Activated CD4-positive, alpha-beta memory T cell treated with anti-CD3 and anti-CD28 coated beads for 36 hours (primary cell): ENCODE measurements at regions of chr17 and their contacts with region 1.

Region 1: DNA sequence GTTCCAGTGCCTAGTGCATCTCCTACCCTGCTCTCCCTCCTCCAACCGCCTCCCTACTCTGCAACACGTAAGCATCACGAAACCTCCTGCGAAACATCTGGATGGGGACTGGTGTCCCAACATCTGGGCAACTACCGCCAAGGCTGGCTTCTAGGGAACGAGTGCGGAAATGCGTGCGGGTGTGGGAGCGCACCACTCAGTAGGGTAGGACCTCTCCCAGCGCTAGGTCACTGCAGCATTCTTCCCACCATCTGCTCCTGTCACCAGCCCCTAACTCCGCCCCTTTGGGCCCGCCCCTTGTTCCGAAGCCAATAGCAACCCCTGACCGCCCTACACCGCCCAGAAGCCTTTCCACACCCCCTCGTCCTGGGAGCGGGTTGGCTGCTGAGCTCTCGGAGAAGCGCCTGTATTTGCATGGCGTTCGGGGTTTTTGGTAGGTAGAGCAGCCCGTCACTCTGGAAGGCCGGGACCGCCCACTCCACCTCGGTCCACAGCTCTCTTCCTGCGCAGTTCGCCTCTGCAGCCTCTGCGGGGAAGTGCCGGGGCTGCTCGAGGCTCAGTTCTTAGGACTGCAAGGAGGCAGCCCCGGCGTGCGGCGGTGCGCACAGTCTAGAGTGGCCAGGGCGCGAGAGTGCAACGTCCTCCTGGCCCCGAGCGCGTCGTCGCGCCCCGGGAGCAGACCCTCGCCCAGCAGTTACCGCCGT is at the start of gene HS3ST3B1:
- DNase-seq: peak; percentile 100
- H3K4me3 Mint-ChIP-seq: peak within 1 kb of the TSS; percentile 93
- H3K27ac Mint-ChIP-seq: peak within 1 kb of the TSS; percentile 92
- H3K4me1 Mint-ChIP-seq: peaks cover 49% of the 10 kb centered on the region
- H3K27me3 Mint-ChIP-seq: peaks cover 26% of the 10 kb centered on the region
- total RNA-seq, gene HS3ST3B1: 13.4 to 13.9 TPM

Region 2: GRCh38 chr17:13346996-13347765 is 953.5 kb before region 1 on chr17:
- CTCF ChIA-PET with region 1: no interaction called
- POLR2A ChIA-PET with region 1: no interaction called
- intact Hi-C with region 1: loop called (anchors 5 kb)
- DNase-seq: peak; percentile 58
- H3K4me3 Mint-ChIP-seq: no peak overlapping the region
- H3K27ac Mint-ChIP-seq: peak overlapping the region; percentile 38
- H3K4me1 Mint-ChIP-seq: peaks cover 16% of the 10 kb centered on the region
- H3K27me3 Mint-ChIP-seq: peaks cover 9% of the 10 kb centered on the region

Region 3: GRCh38 chr17:14118951-14119350 is 181.8 kb before region 1 on chr17:
- CTCF ChIA-PET with region 1: interaction called, 6 read pairs
- POLR2A ChIA-PET with region 1: interaction called, 4 read pairs
- intact Hi-C with region 1: loop called (anchors 2 kb)
- DNase-seq: no peak
- H3K4me3 Mint-ChIP-seq: peak overlapping the region; percentile 30
- H3K27ac Mint-ChIP-seq: peak overlapping the region; percentile 96
- H3K4me1 Mint-ChIP-seq: peaks cover 89% of the 10 kb centered on the region
- H3K27me3 Mint-ChIP-seq: no peaks in the 10 kb centered on the region

Region 4: DNA sequence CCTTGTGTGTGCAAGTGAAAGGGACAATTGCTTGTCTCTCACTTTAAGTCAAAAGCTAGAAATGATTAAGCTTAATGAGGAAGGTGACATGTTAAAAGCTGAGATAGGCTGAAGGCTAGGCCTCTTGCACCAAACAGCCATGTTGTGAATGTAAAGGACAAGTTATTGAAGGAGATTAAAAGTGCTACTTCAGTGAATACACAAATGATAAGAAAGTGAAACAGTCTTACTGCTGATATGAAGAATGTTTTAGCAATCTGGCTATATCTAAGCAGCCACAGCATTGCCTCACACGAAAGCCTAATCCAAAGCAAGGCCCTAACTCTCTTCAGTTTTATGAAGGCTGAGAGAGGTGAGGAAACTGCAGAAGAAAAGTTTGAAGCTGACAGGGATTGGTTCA is 135.1 kb before region 1 on chr17:
- CTCF ChIA-PET with region 1: no interaction called
- POLR2A ChIA-PET with region 1: no interaction called
- intact Hi-C with region 1: no loop called
- DNase-seq: no peak
- H3K4me3 Mint-ChIP-seq: no peak overlapping the region
- H3K27ac Mint-ChIP-seq: no peak overlapping the region
- H3K4me1 Mint-ChIP-seq: peaks cover 15% of the 10 kb centered on the region
- H3K27me3 Mint-ChIP-seq: no peaks in the 10 kb centered on the region

Region 5: DNA sequence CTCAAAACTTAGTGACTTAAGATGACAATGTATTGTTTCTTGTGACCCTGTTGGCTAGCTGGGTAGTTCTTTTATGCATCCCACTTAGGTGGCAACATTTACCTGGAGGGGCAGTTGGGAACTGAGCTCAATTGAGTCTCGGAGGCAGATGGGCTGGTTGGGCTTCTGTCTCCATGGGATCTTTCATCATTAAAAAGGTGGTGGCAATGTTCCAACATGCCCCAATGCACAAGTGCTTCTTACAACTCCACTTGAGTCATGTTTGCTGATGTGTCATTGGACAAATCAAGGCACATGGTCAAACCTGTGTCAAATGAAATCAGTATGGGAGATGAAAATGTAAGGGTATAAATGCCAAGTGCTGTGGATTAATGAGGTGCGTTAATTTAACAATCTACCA is 11.6 kb before region 1 on chr17:
- CTCF ChIA-PET with region 1: no interaction called
- POLR2A ChIA-PET with region 1: no interaction called
- intact Hi-C with region 1: no loop called
- DNase-seq: no peak
- H3K4me3 Mint-ChIP-seq: no peak overlapping the region
- H3K27ac Mint-ChIP-seq: no peak overlapping the region
- H3K4me1 Mint-ChIP-seq: no peaks in the 10 kb centered on the region
- H3K27me3 Mint-ChIP-seq: peaks cover 22% of the 10 kb centered on the region

Region 6: GRCh38 chr17:14337596-14338079 is 36.9 kb after region 1 on chr17:
- CTCF ChIA-PET with region 1: interaction called, 6 read pairs
- POLR2A ChIA-PET with region 1: interaction called, 18 read pairs
- intact Hi-C with region 1: loop called (anchors 1 kb)
- DNase-seq: peak; percentile 85
- H3K4me3 Mint-ChIP-seq: no peak overlapping the region
- H3K27ac Mint-ChIP-seq: peak overlapping the region; percentile 74
- H3K4me1 Mint-ChIP-seq: peaks cover 84% of the 10 kb centered on the region
- H3K27me3 Mint-ChIP-seq: no peaks in the 10 kb centered on the region

Region 7: GRCh38 chr17:14784997-14785696 is 484.4 kb after region 1 on chr17:
- CTCF ChIA-PET with region 1: no interaction called
- POLR2A ChIA-PET with region 1: no interaction called
- intact Hi-C with region 1: loop called (anchors 10 kb)
- DNase-seq: peak; percentile 28
- H3K4me3 Mint-ChIP-seq: no peak overlapping the region
- H3K27ac Mint-ChIP-seq: no peak overlapping the region
- H3K4me1 Mint-ChIP-seq: no peaks in the 10 kb centered on the region
- H3K27me3 Mint-ChIP-seq: peaks cover 10% of the 10 kb centered on the region